ENCODE measurements at regions of chr9 and their contacts with region 1.

Region 1: DNA sequence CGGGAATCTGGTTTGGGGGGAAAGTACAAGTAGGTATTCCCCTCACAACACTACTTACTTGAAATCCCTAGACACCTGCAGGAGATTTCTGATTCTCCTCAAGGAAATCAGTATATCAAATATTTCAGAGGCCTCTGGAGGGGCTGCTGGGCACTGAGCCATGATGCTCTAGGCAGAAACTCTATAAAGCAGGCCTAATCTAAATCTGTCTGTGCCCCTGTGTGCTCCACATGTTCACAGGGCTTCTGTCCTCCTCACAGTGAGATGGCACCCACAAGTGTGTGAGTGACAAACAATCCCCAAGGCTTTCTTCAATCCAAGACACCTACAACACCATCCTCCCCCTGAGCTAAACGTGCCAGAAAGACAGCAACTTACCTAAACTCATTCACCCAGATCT is 39.0 kb downstream of the NIPSNAP3B start:
- DNase-seq: no peak
- H3K4me3 Mint-ChIP-seq: no peak overlapping the region
- H3K27ac Mint-ChIP-seq: no peak overlapping the region
- H3K4me1 Mint-ChIP-seq: no peaks in the 10 kb centered on the region
- H3K27me3 Mint-ChIP-seq: no peaks in the 10 kb centered on the region
- CTCF ChIP-seq: no peak

Region 2: DNA sequence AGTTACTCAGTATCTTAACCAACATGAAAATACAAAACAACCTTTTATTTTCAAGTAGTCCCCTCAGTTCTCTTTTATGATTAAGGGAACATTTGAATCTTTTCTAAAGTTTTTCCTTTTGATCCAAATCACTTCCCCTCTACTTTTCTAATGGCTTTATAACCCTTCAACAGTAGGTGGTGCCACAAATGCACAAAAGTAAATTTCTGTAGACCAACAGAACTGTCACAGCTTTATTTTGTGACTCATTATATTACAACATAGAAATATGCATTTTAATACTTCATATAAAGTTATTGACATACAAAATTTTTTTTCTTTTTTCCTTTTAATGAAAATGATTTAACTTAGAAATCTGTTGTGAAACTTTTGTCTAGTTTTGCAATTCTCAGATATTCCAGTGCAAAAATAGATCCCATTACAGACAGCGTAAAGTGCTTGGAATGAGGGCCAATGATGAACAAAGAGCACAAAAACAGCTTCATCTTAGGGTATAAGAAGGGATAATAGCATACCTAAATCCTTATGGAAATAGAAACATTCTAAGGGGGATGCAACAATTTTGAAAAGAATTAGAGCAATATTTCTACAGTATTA is 22.0 kb before region 1 on chr9:
- CTCF ChIA-PET with region 1: interaction called, 10 read pairs
- POLR2A ChIA-PET with region 1: no interaction called
- intact Hi-C with region 1: no loop called
- DNase-seq: peak; percentile 71
- H3K4me3 Mint-ChIP-seq: no peak overlapping the region
- H3K27ac Mint-ChIP-seq: no peak overlapping the region
- H3K4me1 Mint-ChIP-seq: no peaks in the 10 kb centered on the region
- H3K27me3 Mint-ChIP-seq: no peaks in the 10 kb centered on the region
- CTCF ChIP-seq: peak; percentile 45